GM18951 (cell line): ENCODE measurements at regions of chr19 and their contacts with region 1.

Region 1: GRCh38 chr19:15555759-15556633 is 47.7 kb downstream of the CYP4F22 start:
- POLR2A ChIP-seq: peak; percentile 32

Region 2: DNA sequence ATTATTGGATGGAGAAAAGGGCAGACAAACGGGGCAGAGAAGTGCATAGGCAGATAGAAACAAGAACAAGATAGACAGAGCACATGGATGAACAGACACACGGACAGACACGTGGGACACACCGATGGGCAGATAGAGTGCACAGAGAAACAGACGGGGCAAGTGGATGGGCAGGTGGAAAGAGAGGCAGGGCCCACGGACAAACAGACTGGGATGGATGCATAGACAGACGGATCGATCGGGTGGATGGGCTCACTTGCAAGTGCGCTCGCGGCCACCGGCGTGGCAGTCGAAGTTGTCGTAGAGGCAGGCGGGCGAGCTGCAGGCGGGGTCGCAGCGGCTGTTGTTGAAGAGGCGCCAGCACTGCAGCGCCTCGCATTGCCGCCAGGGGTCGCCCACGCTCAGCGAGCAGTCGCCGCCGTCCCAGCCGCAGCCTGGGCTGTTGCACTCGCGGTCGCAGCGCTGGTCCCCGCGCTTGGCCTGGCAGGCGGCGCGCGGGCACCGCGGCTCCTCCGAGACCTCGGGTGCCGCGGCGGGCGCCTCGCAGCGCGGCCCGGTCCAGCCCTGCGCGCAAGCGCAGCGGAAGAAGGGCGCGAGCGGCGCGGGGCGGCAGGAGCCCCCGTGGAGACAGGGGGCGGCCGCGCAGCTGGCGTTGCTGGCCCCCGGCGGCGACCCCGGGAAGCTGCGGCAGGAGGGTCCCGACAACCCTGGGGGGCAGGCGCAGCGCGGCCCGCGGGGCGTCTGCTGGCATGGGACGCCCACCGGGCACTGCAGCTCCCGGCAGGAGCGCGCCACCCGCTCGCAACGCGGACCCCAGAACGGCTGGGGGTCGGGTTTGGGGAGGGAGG is 378.5 kb before region 1 on chr19:
- in situ Hi-C with region 1: loop called (anchors 10 kb)
- POLR2A ChIP-seq: no peak

Region 3: GRCh38 chr19:15426485-15427349 is 129.3 kb before region 1 on chr19:
- in situ Hi-C with region 1: loop called (anchors 5 kb)
- POLR2A ChIP-seq: no peak

Region 4: GRCh38 chr19:15452111-15453047 is 103.6 kb before region 1 on chr19:
- in situ Hi-C with region 1: no loop called
- POLR2A ChIP-seq: no peak